Activated CD4-positive, alpha-beta memory T cell treated with anti-CD3 and anti-CD28 coated beads for 36 hours (primary cell): ENCODE measurements at regions of chr7 and their contacts with region 1.

Region 1: DNA sequence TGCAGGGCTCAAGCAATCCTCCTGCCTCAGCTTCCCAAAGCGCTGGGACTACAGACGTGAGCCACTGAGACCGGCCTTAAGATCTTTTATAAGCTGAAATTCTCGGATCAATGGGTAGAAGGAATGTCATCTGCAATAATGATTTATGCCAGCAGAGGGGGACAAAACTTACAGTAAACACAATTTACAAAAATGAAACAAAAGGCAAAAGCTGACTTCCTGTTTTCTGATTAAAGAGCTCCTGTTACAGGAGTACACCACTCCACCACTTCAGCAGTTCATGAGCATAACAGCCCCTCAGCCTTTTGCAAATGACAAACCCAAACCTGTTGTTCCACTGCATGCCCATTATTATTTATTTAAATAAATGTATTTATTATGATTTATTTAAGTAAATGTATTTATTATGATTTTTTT is 88.5 kb upstream of the ATP6V0A4 start:
- DNase-seq: peak; percentile 28
- H3K4me3 Mint-ChIP-seq: no peak overlapping the region
- H3K27ac Mint-ChIP-seq: peak overlapping the region; percentile 62
- H3K4me1 Mint-ChIP-seq: peaks cover 15% of the 10 kb centered on the region
- H3K27me3 Mint-ChIP-seq: no peaks in the 10 kb centered on the region

Region 2: DNA sequence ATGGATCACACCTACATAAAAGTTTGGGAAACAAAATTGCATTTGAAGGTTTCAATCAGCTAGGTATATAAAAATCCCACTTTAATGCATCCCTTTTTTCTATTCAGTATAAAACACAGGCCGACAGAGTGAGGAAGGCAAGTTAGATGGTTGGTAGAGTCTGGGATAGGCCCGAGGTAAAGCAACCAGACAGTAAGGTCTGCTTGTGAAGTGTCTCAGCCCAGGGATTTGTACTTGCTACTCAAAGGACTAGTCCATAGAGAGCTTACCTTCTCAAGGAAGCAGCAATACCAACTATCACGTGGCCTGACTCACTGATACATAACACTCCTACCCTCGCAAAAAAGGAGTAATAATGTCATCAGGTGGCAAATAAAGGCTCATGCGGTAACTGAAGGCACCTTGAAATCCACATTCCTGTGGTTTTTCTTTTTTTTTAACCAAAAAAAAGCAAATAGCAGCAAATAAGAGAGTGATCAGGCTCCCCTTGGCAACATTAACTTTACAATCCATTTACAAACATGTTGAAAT is 32.3 kb before region 1 on chr7:
- CTCF ChIA-PET with region 1: no interaction called
- POLR2A ChIA-PET with region 1: no interaction called
- intact Hi-C with region 1: no loop called
- DNase-seq: no peak
- H3K4me3 Mint-ChIP-seq: no peak overlapping the region
- H3K27ac Mint-ChIP-seq: no peak overlapping the region
- H3K4me1 Mint-ChIP-seq: peaks cover 9% of the 10 kb centered on the region
- H3K27me3 Mint-ChIP-seq: peaks cover 9% of the 10 kb centered on the region

Region 3: DNA sequence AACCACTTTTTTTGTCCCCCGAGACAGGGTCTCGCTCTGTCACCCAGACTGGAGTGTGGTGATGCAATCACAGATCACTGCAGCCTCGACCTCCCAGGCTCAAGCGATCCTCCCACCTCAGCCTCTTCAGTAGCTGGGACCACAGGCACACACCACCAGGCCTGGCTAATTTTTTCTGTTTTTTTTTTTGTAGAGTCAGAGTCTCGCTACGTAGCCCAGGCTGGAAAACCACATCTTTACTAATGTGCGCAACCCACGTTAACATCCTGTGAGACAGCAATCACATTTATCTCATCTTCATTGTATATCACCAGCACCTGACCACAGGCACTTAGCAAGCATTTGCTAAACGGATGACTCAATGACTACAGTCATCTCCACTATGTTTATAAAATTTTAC is 10.7 kb before region 1 on chr7:
- CTCF ChIA-PET with region 1: interaction called, 60 read pairs
- POLR2A ChIA-PET with region 1: no interaction called
- intact Hi-C with region 1: loop called (anchors 1 kb)
- DNase-seq: peak; percentile 80
- H3K4me3 Mint-ChIP-seq: peak overlapping the region; percentile 29
- H3K27ac Mint-ChIP-seq: peak overlapping the region; percentile 85
- H3K4me1 Mint-ChIP-seq: peaks cover 25% of the 10 kb centered on the region
- H3K27me3 Mint-ChIP-seq: no peaks in the 10 kb centered on the region

Region 4: DNA sequence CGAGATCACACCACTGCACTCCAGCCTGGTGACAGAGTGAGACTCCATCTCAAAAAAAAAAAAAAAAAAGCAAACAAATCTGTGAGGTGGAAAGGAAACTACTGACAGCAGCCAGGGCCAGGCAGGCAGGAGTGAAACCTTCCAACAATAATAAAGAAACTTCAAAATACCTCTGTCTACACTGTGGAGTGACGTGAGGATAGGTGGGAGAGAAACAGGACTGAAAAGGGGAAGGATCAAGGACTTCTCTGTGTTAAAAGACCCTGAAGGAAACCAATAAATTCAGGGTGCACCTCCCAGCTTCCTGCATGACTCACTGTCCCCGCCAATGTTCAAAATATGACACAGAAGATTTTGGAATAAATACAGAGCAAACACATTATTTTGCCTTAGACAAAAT is 11.7 kb after region 1 on chr7:
- CTCF ChIA-PET with region 1: interaction called, 27 read pairs
- POLR2A ChIA-PET with region 1: no interaction called
- intact Hi-C with region 1: loop called (anchors 1 kb)
- DNase-seq: peak; percentile 45
- H3K4me3 Mint-ChIP-seq: peak overlapping the region; percentile 21
- H3K27ac Mint-ChIP-seq: peak overlapping the region; percentile 70
- H3K4me1 Mint-ChIP-seq: peaks cover 30% of the 10 kb centered on the region
- H3K27me3 Mint-ChIP-seq: peaks cover 15% of the 10 kb centered on the region

Region 5: DNA sequence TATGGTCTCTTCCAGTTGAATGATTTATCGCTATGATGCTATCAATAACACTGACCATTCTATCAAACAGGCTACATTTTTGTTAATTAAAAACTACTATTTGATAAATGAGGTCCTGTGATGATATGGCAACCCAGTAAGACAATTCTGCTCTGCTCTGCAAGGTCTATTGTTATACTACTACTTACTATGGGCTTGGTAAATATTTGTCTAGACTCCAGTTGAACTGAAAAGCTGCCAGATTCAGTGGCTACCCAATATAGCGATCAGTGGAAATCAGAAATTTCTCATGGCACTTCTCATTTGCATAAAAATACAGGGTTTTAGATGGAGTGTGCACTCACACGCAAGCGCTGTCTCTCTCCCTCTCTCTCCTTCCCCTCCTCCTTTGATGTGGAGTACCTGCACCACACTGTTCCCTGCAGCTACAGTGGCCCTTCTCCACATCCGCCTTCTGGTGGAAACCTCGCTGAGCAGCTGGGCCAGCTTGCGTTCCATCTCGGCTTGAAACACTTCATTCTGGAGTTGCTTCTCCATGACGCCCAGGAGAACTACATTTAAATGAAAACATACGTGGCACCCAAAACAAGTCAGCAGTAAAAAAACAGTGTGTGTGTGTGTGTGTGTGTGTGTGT is 16.8 kb after region 1 on chr7:
- CTCF ChIA-PET with region 1: interaction called, 15 read pairs
- POLR2A ChIA-PET with region 1: no interaction called
- intact Hi-C with region 1: loop called (anchors 1 kb)
- DNase-seq: peak; percentile 86
- H3K4me3 Mint-ChIP-seq: peak overlapping the region; percentile 73
- H3K27ac Mint-ChIP-seq: peak overlapping the region; percentile 76
- H3K4me1 Mint-ChIP-seq: peaks cover 32% of the 10 kb centered on the region
- H3K27me3 Mint-ChIP-seq: peaks cover 28% of the 10 kb centered on the region

Region 6: GRCh38 chr7:138981332-138982203 is 95.1 kb after region 1 on chr7 and contains the start of gene KIAA1549:
- CTCF ChIA-PET with region 1: interaction called, 15 read pairs
- POLR2A ChIA-PET with region 1: no interaction called
- intact Hi-C with region 1: loop called (anchors 1 kb)
- DNase-seq: peak; percentile 70
- H3K4me3 Mint-ChIP-seq: peak within 1 kb of the TSS; percentile 79
- H3K27ac Mint-ChIP-seq: no peak within 1 kb of the TSS
- H3K4me1 Mint-ChIP-seq: peaks cover 10% of the 10 kb centered on the region
- H3K27me3 Mint-ChIP-seq: peaks cover 35% of the 10 kb centered on the region
- total RNA-seq, gene KIAA1549: 0.85 to 0.95 TPM

Region 7: GRCh38 chr7:139133335-139134139 is 247.0 kb after region 1 on chr7:
- CTCF ChIA-PET with region 1: no interaction called
- POLR2A ChIA-PET with region 1: no interaction called
- intact Hi-C with region 1: loop called (anchors 5 kb)
- DNase-seq: peak; percentile 93
- H3K4me3 Mint-ChIP-seq: peak overlapping the region; percentile 76
- H3K27ac Mint-ChIP-seq: peak overlapping the region; percentile 59
- H3K4me1 Mint-ChIP-seq: peaks cover 18% of the 10 kb centered on the region
- H3K27me3 Mint-ChIP-seq: no peaks in the 10 kb centered on the region

Region 8: GRCh38 chr7:139340037-139340807 is 453.7 kb after region 1 on chr7:
- CTCF ChIA-PET with region 1: no interaction called
- POLR2A ChIA-PET with region 1: no interaction called
- intact Hi-C with region 1: loop called (anchors 10 kb)
- DNase-seq: peak; percentile 99
- H3K4me3 Mint-ChIP-seq: peak overlapping the region; percentile 86
- H3K27ac Mint-ChIP-seq: peak overlapping the region; percentile 99
- H3K4me1 Mint-ChIP-seq: peaks cover 27% of the 10 kb centered on the region
- H3K27me3 Mint-ChIP-seq: peaks cover 4% of the 10 kb centered on the region